ENCODE measurements at regions of chr4 and their contacts with region 1.

Region 1: DNA sequence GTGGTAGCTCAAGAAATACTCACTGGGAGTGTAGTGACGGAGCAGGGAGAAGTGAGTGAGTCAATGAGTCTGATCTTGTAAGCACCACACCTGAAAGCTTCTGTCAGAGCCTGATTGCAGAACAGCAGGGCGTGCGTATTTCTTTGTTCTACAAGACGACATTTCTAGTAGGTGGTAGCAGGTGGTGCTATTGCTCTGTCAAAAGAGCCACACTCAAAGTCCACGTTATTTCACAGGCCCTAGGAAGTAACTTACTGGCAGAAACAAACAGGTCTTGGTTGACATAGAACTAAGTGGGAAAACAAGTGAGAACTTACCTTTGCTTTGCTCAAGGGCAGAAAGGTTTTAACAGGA is 46.4 kb upstream of the SPRY1 start:
- DNase-seq: peak; percentile 75 to 89 (median 78)
- ATAC-seq: peak; percentile 89
- H3K4me3 ChIP-seq: no peak overlapping the region
- H3K27ac ChIP-seq: peak overlapping the region; percentile 45; the same call in 1 of the 3 replicates
- H3K4me1 ChIP-seq: peaks cover 16 to 24% of the 10 kb centered on the region in 2 experiments
- H3K27me3 ChIP-seq: no peaks in the 10 kb centered on the region
- CTCF ChIP-seq: peak; percentile 67 to 76 (median 74)
- EP300 ChIP-seq: peak; percentile 67
- POLR2A ChIP-seq: no peak
- RAD21 ChIP-seq: peak; percentile 75 to 89

Region 2: GRCh38 chr4:123102897-123103471 is 247.2 kb before region 1 on chr4:
- CTCF ChIA-PET with region 1: no interaction called
- POLR2A ChIA-PET with region 1: no interaction called
- in situ Hi-C with region 1: no loop called
- intact Hi-C with region 1: loop called (anchors 2 kb)
- DNase-seq: peak; percentile 37 to 44 (median 42)
- ATAC-seq: peak; percentile 86
- H3K4me3 ChIP-seq: no peak overlapping the region
- H3K27ac ChIP-seq: no peak overlapping the region
- H3K4me1 ChIP-seq: peaks cover 0 to 4% of the 10 kb centered on the region in 2 experiments; a peak in 1 of 5 replicates
- H3K27me3 ChIP-seq: no peaks in the 10 kb centered on the region
- CTCF ChIP-seq: peak; percentile 30 to 64 (median 56); a peak in 4 of 6 replicates
- EP300 ChIP-seq: no peak
- POLR2A ChIP-seq: no peak
- RAD21 ChIP-seq: peak; percentile 68 to 69

Region 3: DNA sequence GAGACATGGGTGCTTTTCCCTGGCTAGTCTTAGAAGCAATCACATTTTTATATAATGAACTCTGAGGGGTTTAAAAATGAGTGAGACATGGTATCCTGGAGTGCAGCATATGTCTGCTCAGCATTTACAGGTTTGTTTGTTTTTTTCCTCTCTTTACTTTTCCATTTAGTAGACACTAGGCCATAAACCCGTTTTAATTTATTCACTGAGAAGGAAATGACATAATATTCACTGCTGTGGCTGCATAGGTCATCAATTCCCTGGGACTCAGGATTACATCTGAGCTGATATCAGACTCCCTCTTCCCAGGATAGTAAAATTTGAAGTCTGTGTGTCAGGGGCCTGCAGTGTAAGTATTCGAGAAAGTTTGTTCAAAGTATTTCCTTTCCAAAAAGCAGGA is 132.5 kb before region 1 on chr4:
- CTCF ChIA-PET with region 1: no interaction called
- POLR2A ChIA-PET with region 1: no interaction called
- in situ Hi-C with region 1: no loop called
- intact Hi-C with region 1: no loop called
- DNase-seq: no peak
- ATAC-seq: peak; percentile 30; the same call in 2 of the 3 replicates
- H3K4me3 ChIP-seq: no peak overlapping the region
- H3K27ac ChIP-seq: no peak overlapping the region
- H3K4me1 ChIP-seq: peaks cover 0 to 3% of the 10 kb centered on the region in 2 experiments; a peak in 3 of 5 replicates
- H3K27me3 ChIP-seq: no peaks in the 10 kb centered on the region
- CTCF ChIP-seq: no peak
- EP300 ChIP-seq: no peak
- POLR2A ChIP-seq: no peak
- RAD21 ChIP-seq: no peak

Region 4: DNA sequence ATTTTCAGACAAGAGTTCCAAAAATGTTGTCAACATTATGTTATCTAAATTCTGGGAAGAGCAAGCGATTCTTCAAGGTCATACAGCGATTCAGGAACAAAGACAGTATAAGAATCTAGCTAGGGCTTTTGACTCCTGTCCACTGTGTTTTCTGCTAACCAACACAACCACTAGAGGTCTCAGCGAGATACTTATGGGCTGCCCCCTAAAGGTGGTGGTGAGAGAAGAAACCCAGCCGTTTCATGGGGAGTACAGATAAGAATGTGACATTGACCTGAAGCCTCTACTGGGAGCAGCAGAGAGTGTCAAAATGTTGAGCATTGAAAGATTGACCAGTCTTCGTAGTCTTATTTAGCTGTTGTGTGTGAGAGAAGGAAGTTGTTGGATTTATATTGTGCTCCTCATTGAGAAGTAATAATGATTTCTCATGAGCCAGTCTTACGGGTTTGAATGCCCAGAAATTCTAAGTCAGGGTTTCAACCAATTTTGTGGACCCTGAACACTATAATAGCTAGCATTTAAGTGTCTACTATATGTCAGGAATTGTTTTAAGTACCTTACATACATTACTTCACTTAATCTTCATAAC is 214.7 kb after region 1 on chr4:
- CTCF ChIA-PET with region 1: no interaction called
- POLR2A ChIA-PET with region 1: no interaction called
- in situ Hi-C with region 1: no loop called
- intact Hi-C with region 1: loop called (anchors 2 kb)
- DNase-seq: peak; percentile 74 to 90 (median 80)
- ATAC-seq: peak; percentile 100
- H3K4me3 ChIP-seq: no peak overlapping the region
- H3K27ac ChIP-seq: no peak overlapping the region
- H3K4me1 ChIP-seq: peaks cover 0 to 3% of the 10 kb centered on the region in 2 experiments; a peak in 1 of 5 replicates
- H3K27me3 ChIP-seq: peaks cover 0 to 5% of the 10 kb centered on the region in 2 experiments; a peak in 1 of 5 replicates
- CTCF ChIP-seq: peak; percentile 95 to 100 (median 100)
- EP300 ChIP-seq: peak; percentile 67; the same call in 1 of the 2 replicates
- POLR2A ChIP-seq: no peak
- RAD21 ChIP-seq: peak; percentile 80 to 86

Region 5: GRCh38 chr4:123776254-123776653 is 426.1 kb after region 1 on chr4:
- CTCF ChIA-PET with region 1: interaction called, 3 read pairs
- POLR2A ChIA-PET with region 1: no interaction called
- in situ Hi-C with region 1: no loop called
- intact Hi-C with region 1: loop called (anchors 1 kb)
- DNase-seq: no peak
- ATAC-seq: no peak
- H3K4me3 ChIP-seq: no peak overlapping the region
- H3K27ac ChIP-seq: no peak overlapping the region
- H3K4me1 ChIP-seq: no peaks in the 10 kb centered on the region
- H3K27me3 ChIP-seq: no peaks in the 10 kb centered on the region
- CTCF ChIP-seq: no peak
- EP300 ChIP-seq: no peak
- POLR2A ChIP-seq: no peak
- RAD21 ChIP-seq: no peak

Region 6: GRCh38 chr4:123832173-123833026 is 482.2 kb after region 1 on chr4:
- CTCF ChIA-PET with region 1: no interaction called
- POLR2A ChIA-PET with region 1: no interaction called
- in situ Hi-C with region 1: no loop called
- intact Hi-C with region 1: no loop called
- DNase-seq: no peak
- ATAC-seq: no peak
- H3K4me3 ChIP-seq: no peak overlapping the region
- H3K27ac ChIP-seq: no peak overlapping the region
- H3K4me1 ChIP-seq: no peaks in the 10 kb centered on the region
- H3K27me3 ChIP-seq: no peaks in the 10 kb centered on the region
- CTCF ChIP-seq: no peak
- EP300 ChIP-seq: no peak
- POLR2A ChIP-seq: no peak
- RAD21 ChIP-seq: no peak

Region 7: DNA sequence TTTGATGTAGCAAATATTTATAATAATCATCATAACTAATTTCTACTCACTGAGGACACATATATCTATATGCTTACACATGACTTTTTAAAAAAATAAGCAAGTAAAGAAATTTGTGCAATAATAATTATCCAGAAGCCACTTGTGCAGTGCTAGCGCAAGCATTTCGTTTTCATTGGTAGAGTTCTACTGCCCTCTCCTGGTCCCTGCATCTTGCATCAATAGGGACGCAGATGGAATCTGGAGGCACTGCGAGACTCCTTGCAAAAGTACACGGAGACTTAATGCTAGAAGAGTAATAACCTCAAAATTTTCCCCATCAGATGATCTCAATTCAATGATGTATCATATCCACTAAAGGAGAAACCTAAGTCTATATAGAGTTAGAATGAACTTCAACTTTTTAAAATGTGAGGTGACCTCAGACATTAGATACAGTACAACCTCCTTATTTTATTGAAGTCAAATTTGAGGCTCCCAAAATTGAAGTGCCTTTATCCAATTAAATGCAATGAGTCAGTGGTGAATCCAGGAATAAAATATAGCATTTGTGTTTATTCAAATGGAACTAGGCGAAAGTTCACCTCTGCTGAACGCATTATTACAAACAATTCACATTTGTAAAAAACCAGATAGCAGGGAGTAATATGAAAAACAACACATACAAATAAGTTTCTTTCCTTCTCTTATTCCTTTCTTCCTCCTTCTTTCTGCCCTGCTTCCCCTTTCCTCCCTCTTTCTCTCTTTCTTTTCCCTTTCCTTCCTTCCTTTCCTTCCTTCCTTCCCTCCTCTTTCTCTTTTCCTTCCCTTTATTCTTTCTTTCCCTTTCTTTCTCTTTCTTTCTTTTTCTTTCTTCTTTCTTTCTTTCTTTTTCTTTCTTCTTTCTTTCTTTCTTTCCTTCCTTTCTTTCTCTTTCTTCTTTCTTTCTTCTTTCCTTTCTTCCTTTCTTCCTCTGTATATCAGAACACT is 912.3 kb after region 1 on chr4:
- CTCF ChIA-PET with region 1: interaction called, 3 read pairs
- POLR2A ChIA-PET with region 1: no interaction called
- in situ Hi-C with region 1: loop called (anchors 25 kb)
- intact Hi-C with region 1: loop called (anchors 1 kb)
- DNase-seq: peak; percentile 54 to 77 (median 59)
- ATAC-seq: peak; percentile 94
- H3K4me3 ChIP-seq: no peak overlapping the region
- H3K27ac ChIP-seq: no peak overlapping the region
- H3K4me1 ChIP-seq: no peaks in the 10 kb centered on the region
- H3K27me3 ChIP-seq: no peaks in the 10 kb centered on the region
- CTCF ChIP-seq: peak; percentile 65 to 70 (median 70)
- EP300 ChIP-seq: no peak
- POLR2A ChIP-seq: no peak
- RAD21 ChIP-seq: peak; percentile 74 to 81

Measured in K562 (cell line).